ENCODE measurements at regions of chr1 and their contacts with region 1.

Region 1: DNA sequence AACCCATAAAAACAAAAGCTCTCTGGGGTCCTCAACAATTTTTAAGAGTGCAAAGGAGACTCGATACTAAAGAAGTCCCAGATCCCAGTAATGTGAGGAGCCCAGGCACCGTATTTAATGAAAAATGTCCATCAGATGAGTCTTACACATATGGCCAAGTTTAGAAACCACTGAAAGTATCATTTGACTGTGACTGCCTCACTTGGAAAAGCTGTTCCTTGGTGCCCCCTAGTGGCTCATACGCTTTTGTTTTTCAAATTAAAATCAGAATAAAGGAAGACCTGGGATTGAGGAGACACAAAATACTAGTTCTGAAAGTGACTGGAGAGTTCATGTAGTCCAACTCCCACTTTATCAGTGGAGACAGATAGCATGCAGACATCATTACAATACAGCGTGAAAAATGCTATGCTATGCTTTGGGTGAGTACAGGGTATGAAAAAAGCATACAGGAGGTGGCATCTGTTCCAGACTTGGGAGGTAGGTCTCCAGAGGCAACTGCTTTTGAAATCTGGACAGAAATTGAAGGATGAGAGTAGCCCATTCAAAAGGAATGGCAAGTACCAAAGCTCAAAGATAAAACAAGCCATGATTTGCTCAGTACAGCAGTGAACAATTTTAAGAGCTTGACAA is 33.8 kb downstream of the GDAP2 start:
- DNase-seq: no peak

Region 2: GRCh38 chr1:117534995-117535467 is 360.6 kb before region 1 on chr1:
- intact Hi-C with region 1: loop called in 1 of 2 experiments (anchors 10 kb)
- DNase-seq: no peak